Transverse colon (tissue), 4 donors: ENCODE measurements at regions of chr12 and their contacts with region 1.

Region 1: DNA sequence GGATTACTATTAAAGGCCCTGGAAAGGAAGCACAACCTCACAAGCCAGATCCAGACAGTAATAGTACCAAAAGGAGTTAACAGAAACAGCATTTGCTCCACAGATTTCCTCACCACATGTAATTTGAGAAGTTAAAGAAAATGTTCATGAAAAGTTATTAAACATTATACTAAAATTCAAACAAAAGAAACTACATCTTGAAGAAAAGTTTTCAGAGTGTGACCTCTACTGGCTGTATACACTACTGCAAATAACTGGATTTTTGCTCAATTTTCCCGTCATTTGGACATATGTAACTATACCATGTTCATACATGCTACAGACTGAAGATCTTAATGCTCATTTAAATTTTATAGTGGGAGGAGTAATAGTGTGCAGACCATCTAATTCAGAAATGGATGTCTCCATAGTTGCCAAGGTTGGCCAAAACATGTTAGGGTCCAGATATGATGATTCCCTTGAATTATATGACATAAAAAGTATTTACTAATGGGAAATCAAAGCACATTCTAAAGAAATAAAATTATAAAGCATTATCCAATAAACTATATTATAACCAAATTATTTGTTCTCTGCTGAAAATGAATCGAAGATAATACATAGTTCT is 5.6 kb downstream of the KRR1 start:
- DNase-seq: no peak
- H3K4me3 ChIP-seq: no peak overlapping the region
- H3K27ac ChIP-seq: no peak overlapping the region
- H3K4me1 ChIP-seq: peaks cover 9 to 14% (median 10%) of the 10 kb centered on the region in 4 donors
- H3K27me3 ChIP-seq: no peaks in the 10 kb centered on the region
- CTCF ChIP-seq: peak; percentile 29 to 53 (median 38)
- EP300 ChIP-seq: no peak
- POLR2A ChIP-seq: no peak

Region 2: GRCh38 chr12:75480469-75480949 is 25.3 kb before region 1 on chr12 and contains the start of gene GLIPR1:
- in situ Hi-C with region 1: no loop called
- intact Hi-C with region 1: loop called (anchors 2 kb)
- DNase-seq: peak; percentile 68
- H3K4me3 ChIP-seq: peak within 1 kb of the TSS; percentile 12 to 41 (median 22)
- H3K27ac ChIP-seq: peak within 1 kb of the TSS; percentile 72 to 83 (median 78)
- H3K4me1 ChIP-seq: peaks cover 0 to 20% (median 10%) of the 10 kb centered on the region in 4 donors
- H3K27me3 ChIP-seq: no peaks in the 10 kb centered on the region
- CTCF ChIP-seq: no peak
- EP300 ChIP-seq: no peak
- POLR2A ChIP-seq: peak; percentile 69
- total RNA-seq, gene GLIPR1: 3.3 to 10.6 (median 3.6) TPM